CD4-positive, alpha-beta memory T cell (primary cell): ENCODE measurements at regions of chr20 and their contacts with region 1.

Region 1: GRCh38 chr20:44080646-44081267 is 106.2 kb downstream of the JPH2 start:
- DNase-seq: peak; percentile 72 to 80 (median 75)
- H3K4me3 ChIP-seq: no peak overlapping the region
- H3K4me3 Mint-ChIP-seq: no peak overlapping the region
- H3K27ac ChIP-seq: no peak overlapping the region
- H3K27ac Mint-ChIP-seq: peak overlapping the region in 5 of 7 donors; percentile 33 to 88 (median 67)
- H3K4me1 ChIP-seq: peaks cover 5% of the 10 kb centered on the region
- H3K4me1 Mint-ChIP-seq: peaks cover 5 to 11% (median 8%) of the 10 kb centered on the region in 4 donors
- H3K27me3 ChIP-seq: no peaks in the 10 kb centered on the region
- H3K27me3 Mint-ChIP-seq: peaks cover 0 to 1% of the 10 kb centered on the region in 2 donors

Region 2: DNA sequence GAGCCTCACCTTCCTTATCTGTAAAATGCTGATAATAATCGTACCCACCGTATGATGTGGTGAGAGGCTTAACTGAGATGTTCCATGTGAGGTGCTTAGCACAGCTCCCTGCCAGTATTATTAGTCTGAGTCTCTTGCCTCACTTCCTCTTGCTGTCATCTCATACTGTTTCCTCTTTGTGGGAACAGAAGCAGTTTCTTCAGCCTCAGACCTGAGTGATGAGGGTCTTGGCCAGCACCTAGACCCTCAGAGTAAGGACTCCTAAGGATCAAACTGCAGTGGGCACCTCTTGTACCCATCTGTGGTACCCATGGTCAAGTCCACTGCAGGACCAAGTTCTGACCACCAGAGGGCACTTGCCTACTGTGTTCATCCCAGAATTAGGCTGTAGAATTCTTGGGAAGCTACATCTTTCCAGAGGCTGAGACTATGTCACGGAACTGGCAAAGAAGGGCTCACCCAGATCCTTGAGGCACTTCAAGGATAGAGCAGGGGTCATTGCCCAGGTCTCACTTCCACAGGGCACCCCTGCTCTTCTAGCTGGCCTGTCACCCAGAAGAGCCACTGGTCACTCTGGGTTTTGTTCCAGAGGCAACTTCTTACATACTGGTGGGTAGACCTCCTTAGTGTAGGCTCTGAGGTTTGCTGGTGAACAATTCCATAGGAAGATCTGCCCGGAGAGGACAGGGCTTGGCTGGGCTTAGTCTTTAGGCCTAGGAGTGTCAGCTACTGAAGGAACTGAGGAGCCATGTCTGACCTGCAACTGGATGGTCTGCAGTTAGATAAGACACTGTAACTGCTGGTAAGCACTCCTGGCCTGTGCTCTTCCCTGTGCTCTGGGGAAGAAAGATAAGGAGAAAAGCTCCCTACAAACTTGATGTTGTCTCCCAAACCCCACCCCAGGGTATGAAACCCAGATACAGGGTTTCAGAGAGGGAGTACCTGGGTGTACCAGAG is 542.6 kb before region 1 on chr20:
- CTCF ChIA-PET with region 1: interaction called, 3 read pairs
- POLR2A ChIA-PET with region 1: no interaction called
- intact Hi-C with region 1: loop called (anchors 1 kb)
- DNase-seq: peak in 4 of 5 donors; percentile 15 to 25 (median 21)
- H3K4me3 ChIP-seq: no peak overlapping the region
- H3K4me3 Mint-ChIP-seq: no peak overlapping the region
- H3K27ac ChIP-seq: no peak overlapping the region
- H3K27ac Mint-ChIP-seq: peak overlapping the region in 2 of 7 donors; percentile 3 to 4
- H3K4me1 ChIP-seq: no peaks in the 10 kb centered on the region
- H3K4me1 Mint-ChIP-seq: peaks cover 0 to 2% (median 0%) of the 10 kb centered on the region in 4 donors
- H3K27me3 ChIP-seq: no peaks in the 10 kb centered on the region
- H3K27me3 Mint-ChIP-seq: no peaks in the 10 kb centered on the region

Region 3: DNA sequence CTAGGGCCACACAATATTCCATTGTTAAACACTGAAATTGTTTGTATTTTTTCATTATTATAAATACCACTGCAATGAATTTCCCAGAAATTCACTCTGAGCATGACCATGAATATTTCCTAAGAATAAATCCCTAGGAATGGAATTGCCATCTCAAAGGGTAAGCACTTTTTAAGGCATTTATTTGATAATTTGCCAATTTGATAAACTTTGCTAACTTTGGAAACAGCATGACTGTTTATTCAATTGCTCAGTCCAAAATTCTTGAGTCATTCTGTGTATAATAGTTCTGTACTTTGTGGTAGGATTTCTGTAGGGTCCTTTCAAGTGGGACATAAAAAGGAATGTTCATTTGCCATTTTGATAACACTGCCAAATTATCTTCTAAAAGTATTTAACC is 210.3 kb before region 1 on chr20:
- CTCF ChIA-PET with region 1: no interaction called
- POLR2A ChIA-PET with region 1: no interaction called
- intact Hi-C with region 1: no loop called
- DNase-seq: no peak
- H3K4me3 ChIP-seq: no peak overlapping the region
- H3K4me3 Mint-ChIP-seq: no peak overlapping the region
- H3K27ac ChIP-seq: no peak overlapping the region
- H3K27ac Mint-ChIP-seq: no peak overlapping the region
- H3K4me1 ChIP-seq: no peaks in the 10 kb centered on the region
- H3K4me1 Mint-ChIP-seq: no peaks in the 10 kb centered on the region
- H3K27me3 ChIP-seq: no peaks in the 10 kb centered on the region
- H3K27me3 Mint-ChIP-seq: peaks cover 0 to 2% of the 10 kb centered on the region in 2 donors

Region 4: GRCh38 chr20:43925801-43926200 is 155.0 kb before region 1 on chr20:
- CTCF ChIA-PET with region 1: interaction called, 6 read pairs
- POLR2A ChIA-PET with region 1: no interaction called
- intact Hi-C with region 1: loop called (anchors 1 kb)
- DNase-seq: no peak
- H3K4me3 ChIP-seq: no peak overlapping the region
- H3K4me3 Mint-ChIP-seq: peak overlapping the region in 6 of 8 donors; percentile 55 to 74 (median 62)
- H3K27ac ChIP-seq: no peak overlapping the region
- H3K27ac Mint-ChIP-seq: peak overlapping the region in 1 of 7 donors; percentile 16
- H3K4me1 ChIP-seq: peaks cover 64% of the 10 kb centered on the region
- H3K4me1 Mint-ChIP-seq: peaks cover 38 to 51% (median 47%) of the 10 kb centered on the region in 4 donors
- H3K27me3 ChIP-seq: no peaks in the 10 kb centered on the region
- H3K27me3 Mint-ChIP-seq: peaks cover 11 to 17% of the 10 kb centered on the region in 2 donors

Region 5: GRCh38 chr20:44056010-44056698 is 24.6 kb before region 1 on chr20:
- CTCF ChIA-PET with region 1: interaction called, 99 read pairs
- POLR2A ChIA-PET with region 1: interaction called, 5 read pairs
- intact Hi-C with region 1: loop called (anchors 1 kb)
- DNase-seq: peak; percentile 32 to 57 (median 54)
- H3K4me3 ChIP-seq: no peak overlapping the region
- H3K4me3 Mint-ChIP-seq: no peak overlapping the region
- H3K27ac ChIP-seq: no peak overlapping the region
- H3K27ac Mint-ChIP-seq: no peak overlapping the region
- H3K4me1 ChIP-seq: no peaks in the 10 kb centered on the region
- H3K4me1 Mint-ChIP-seq: peaks cover 0 to 6% (median 4%) of the 10 kb centered on the region in 4 donors
- H3K27me3 ChIP-seq: no peaks in the 10 kb centered on the region
- H3K27me3 Mint-ChIP-seq: peaks cover 0 to 2% of the 10 kb centered on the region in 2 donors